ENCODE measurements at regions of chr4 and their contacts with region 1.

Region 1: DNA sequence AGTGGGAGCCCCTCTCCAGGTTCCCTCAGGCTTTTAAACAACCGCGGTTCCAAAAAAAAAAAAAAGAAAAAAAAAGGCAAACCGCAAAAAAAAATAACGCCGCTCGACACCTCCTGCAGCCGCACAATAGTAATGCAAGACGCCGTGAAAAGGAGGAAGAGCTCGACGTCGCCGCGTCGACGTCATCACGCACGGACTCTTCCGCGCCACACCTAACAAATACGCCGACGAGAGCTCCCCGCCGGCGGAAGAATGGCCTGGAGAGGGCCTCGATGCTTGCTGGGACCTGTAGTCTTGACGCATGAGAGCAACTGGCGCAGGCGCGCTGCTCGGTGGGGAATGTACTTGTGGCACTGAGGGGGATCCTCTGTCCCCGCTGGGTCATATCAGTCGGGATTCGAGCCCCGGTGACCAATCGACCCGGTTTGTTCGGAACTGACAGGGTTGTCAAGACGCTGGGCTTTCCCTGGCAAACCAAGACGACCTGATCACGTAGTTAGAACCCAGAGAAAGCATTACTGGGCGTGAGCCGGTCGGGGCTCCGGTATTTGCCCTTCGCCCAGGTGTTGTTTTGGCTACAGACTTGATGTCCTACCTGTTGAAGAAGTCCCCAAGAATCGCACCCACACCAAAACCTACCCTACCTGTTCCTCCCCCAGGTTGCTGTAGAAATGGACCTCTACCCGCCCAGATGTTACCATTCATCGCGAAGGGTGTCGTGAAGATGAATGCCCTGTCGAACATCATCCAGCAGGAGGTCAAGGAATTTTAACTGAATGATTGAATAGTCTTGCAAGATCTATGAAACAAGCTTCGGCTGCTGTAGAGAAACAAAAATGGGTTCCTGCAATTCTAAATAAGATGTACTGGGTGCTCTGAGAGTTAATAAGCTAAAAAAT is at the start of gene CBR4:
- DNase-seq: peak; percentile 96
- ATAC-seq: peak; percentile 98
- H3K4me3 ChIP-seq: peak within 1 kb of the TSS; percentile 74 to 82
- H3K27ac ChIP-seq: peak within 1 kb of the TSS; percentile 69
- H3K4me1 ChIP-seq: peaks cover 11 to 19% of the 10 kb centered on the region in 2 experiments; a peak in 3 of 4 replicates
- H3K27me3 ChIP-seq: no peaks in the 10 kb centered on the region
- CTCF ChIP-seq: peak in 2 of 3 experiments; percentile 14 to 18; a peak in 3 of 6 replicates
- POLR2A ChIP-seq: peak; percentile 86
- RAD21 ChIP-seq: no peak
- total RNA-seq, gene CBR4: 32.3 TPM

Region 2: GRCh38 chr4:167537761-167538160 is 1472.6 kb before region 1 on chr4:
- CTCF ChIA-PET with region 1: no interaction called
- POLR2A ChIA-PET with region 1: no interaction called
- RAD21 ChIA-PET with region 1: no interaction called
- intact Hi-C with region 1: no loop called
- DNase-seq: no peak
- ATAC-seq: no peak
- H3K4me3 ChIP-seq: no peak overlapping the region
- H3K27ac ChIP-seq: no peak overlapping the region
- H3K4me1 ChIP-seq: no peaks in the 10 kb centered on the region
- H3K27me3 ChIP-seq: no peaks in the 10 kb centered on the region
- CTCF ChIP-seq: 0 out of 6 replicates have a peak, but pooled peaks of 1 of the 3 experiments have one; percentile 10
- POLR2A ChIP-seq: no peak
- RAD21 ChIP-seq: no peak

Region 3: DNA sequence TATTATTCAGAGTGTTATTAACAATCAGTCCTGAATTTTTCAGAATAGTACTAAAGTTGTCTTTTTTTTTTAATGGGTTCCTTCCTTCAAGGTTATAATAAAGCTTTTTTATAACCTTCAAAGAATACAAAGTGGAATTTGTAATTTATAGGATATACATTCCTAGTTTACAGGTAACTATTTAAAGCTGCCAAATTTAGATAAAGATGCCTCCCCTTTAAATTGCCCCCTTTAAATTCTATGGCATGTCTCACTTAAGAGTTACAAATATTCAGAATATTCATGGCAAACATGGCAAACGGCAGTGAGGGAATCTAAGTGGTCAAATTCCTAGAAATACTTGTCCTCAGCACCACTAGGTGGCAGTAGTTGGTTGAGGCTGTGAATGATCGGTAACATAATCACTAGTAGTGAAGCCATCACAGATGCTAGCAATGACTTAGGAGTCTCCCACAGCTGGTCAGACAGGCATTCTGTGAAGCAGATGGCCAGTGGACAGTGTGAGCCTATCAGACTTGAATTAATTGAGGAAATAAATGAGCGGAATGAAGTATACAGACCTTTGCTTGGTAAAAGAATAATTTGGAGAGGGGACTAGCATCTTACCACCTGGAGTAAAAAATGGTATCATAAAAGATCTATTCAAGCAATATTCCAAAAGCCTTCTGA is 86.7 kb before region 1 on chr4:
- CTCF ChIA-PET with region 1: interaction called, 7 read pairs
- POLR2A ChIA-PET with region 1: no interaction called
- RAD21 ChIA-PET with region 1: no interaction called
- intact Hi-C with region 1: loop called (anchors 2 kb)
- DNase-seq: peak; percentile 61
- ATAC-seq: peak; percentile 84
- H3K4me3 ChIP-seq: no peak overlapping the region
- H3K27ac ChIP-seq: peak overlapping the region; percentile 17; the same call in 1 of the 2 replicates
- H3K4me1 ChIP-seq: no peaks in the 10 kb centered on the region
- H3K27me3 ChIP-seq: no peaks in the 10 kb centered on the region
- CTCF ChIP-seq: peak; percentile 63 to 83 (median 74)
- POLR2A ChIP-seq: no peak
- RAD21 ChIP-seq: peak; percentile 78

Region 4: DNA sequence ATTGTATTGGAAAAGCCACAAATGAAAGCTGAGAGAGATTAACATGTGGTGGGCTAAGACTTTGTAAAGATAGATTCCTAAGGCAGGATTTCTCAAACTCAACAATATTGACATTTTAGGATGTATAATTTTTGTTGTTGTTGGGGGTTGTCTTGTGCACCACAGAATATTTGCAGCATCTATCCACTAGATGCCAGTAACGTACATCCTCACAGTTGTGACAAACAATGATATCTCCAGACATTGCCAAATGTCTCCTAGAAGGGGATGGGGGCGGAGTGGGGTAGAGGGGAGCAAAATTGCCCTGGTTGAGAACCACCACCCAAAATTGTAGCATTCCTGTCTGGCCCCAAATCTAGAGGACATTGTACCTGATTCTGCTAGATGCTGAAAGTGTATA is 14.4 kb after region 1 on chr4:
- CTCF ChIA-PET with region 1: interaction called, 15 read pairs
- POLR2A ChIA-PET with region 1: interaction called, 7 read pairs
- RAD21 ChIA-PET with region 1: interaction called in 1 of 2 experiments, 3 read pairs
- intact Hi-C with region 1: no loop called
- DNase-seq: peak; percentile 15
- ATAC-seq: peak; percentile 93
- H3K4me3 ChIP-seq: no peak overlapping the region
- H3K27ac ChIP-seq: no peak overlapping the region
- H3K4me1 ChIP-seq: peaks cover 2 to 9% of the 10 kb centered on the region in 2 experiments; a peak in 3 of 4 replicates
- H3K27me3 ChIP-seq: no peaks in the 10 kb centered on the region
- CTCF ChIP-seq: peak; percentile 62 to 76 (median 63); a peak in 5 of 6 replicates
- POLR2A ChIP-seq: no peak
- RAD21 ChIP-seq: peak; percentile 94

Region 5: DNA sequence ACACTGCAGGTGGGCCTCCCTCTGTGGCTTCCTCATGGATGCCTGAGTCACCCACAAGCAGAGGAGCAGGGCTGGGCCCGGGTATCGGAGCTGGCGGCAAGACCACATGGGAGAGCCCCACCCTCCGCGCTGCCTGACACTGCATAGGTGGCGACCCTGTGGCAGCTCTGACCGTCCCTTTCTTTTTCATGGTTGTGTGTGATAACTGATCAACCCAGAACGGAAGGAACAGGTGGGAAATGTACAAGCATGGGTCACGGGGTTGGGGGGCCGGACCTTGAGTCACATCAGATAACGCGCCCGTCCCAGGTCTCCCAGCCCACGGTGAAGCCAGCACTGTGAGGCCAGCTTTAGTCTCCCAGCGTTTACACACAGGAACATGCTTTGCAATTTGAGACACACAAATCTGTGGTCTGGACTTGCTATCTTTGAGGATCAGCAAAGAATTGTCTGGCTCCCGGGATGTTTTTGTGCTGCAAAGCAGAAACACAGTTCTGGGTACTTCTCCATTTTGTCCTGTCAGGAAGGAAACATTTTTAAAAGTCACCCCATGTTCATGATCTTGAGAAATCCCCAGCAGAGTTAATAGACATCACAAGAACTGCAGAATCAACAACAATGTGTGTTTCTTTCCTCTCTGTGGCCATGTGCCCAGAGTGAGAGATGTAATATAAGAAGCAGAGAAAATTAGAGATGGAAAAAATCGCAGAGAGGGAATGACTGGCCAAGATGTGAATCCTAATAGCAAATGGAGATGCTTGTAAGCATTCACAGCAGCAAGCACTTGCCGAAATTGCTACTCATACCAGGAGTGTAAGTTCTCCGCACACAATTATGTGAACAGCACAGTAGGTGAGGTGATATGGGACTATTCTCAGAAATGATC is 69.8 kb after region 1 on chr4:
- CTCF ChIA-PET with region 1: no interaction called
- POLR2A ChIA-PET with region 1: no interaction called
- RAD21 ChIA-PET with region 1: no interaction called
- intact Hi-C with region 1: no loop called
- DNase-seq: no peak
- ATAC-seq: no peak
- H3K4me3 ChIP-seq: no peak overlapping the region
- H3K27ac ChIP-seq: no peak overlapping the region
- H3K4me1 ChIP-seq: no peaks in the 10 kb centered on the region
- H3K27me3 ChIP-seq: no peaks in the 10 kb centered on the region
- CTCF ChIP-seq: no peak
- POLR2A ChIP-seq: no peak
- RAD21 ChIP-seq: no peak

Region 6: DNA sequence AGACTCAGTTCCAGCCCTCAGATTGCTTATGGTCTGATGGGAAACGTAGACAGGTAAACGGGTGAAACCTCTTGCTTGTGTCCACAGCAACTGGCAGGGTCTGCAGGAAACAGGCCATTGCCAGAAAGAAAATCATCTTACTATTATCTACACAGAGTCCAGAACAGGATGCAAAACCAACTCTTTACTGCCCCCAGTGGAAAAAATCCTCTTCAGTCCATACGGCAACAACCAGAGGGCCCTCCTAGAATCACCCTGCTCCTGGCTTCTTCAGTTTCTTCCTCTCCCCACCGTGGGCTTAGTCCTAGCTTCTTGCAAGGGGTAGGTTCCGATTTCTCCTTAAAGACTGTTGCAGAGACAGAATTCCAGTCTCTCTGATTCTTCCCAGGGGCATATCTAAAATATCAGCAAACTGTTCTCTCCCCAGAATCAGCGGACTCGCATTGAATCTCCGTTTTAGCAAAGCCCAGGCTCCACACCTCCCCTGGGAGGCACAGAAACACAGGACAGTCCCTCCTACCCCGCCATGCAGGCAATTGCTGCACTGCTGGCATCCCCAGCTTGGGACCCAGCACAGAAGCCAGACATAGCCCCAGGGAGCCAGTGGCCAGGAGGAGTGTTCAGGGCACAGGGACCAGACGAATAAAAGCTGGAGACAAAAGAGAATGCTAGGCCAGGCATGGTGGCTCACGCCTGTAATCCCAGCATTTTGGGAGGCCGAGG is 301.4 kb after region 1 on chr4:
- CTCF ChIA-PET with region 1: interaction called, 3 read pairs
- POLR2A ChIA-PET with region 1: no interaction called
- RAD21 ChIA-PET with region 1: no interaction called
- intact Hi-C with region 1: loop called (anchors 5 kb)
- DNase-seq: peak; percentile 66
- ATAC-seq: peak; percentile 96
- H3K4me3 ChIP-seq: no peak overlapping the region
- H3K27ac ChIP-seq: peak overlapping the region; percentile 22; the same call in 1 of the 2 replicates
- H3K4me1 ChIP-seq: peaks cover 15 to 40% of the 10 kb centered on the region in 2 experiments
- H3K27me3 ChIP-seq: no peaks in the 10 kb centered on the region
- CTCF ChIP-seq: peak; percentile 61 to 81 (median 68); a peak in 5 of 6 replicates
- POLR2A ChIP-seq: no peak
- RAD21 ChIP-seq: peak; percentile 75

Region 7: DNA sequence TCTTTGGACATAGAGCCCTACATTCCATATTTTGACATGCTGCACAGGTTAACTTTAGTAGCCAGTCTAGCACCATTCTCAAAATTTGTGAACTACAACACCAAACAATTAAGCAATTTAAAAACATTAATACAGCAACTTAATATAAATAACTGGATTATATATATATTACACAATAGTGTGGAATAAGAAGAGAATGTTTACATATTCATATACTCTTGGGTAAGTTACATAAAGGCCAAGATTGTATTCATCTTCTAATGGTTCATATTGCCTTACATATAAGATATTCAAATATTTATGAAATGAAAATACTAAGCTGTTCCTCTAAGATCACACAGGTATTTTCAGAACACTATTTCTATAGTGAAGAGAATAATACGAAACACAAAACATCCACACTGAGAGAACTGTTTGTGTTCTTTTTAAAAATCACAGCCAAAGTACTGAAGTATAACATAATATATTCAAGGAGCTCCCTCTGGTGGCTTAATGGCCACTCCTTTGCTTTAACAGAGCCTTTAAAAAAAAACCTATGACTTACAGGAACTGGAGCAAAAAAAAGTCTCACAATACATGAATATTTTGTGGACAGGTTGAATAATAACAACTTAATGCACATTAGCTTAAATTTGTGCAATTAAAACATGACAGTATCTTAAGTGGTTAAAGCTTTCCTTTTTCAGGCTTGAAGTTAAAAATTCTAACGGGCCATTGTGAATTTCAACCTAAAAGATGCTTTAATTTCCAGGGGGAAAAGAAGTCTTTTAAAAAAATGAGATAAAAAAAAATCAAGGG is 555.8 kb after region 1 on chr4:
- CTCF ChIA-PET with region 1: interaction called, 4 read pairs
- POLR2A ChIA-PET with region 1: no interaction called
- RAD21 ChIA-PET with region 1: no interaction called
- intact Hi-C with region 1: loop called (anchors 5 kb)
- DNase-seq: peak; percentile 38
- ATAC-seq: peak; percentile 85
- H3K4me3 ChIP-seq: no peak overlapping the region
- H3K27ac ChIP-seq: no peak overlapping the region
- H3K4me1 ChIP-seq: no peaks in the 10 kb centered on the region
- H3K27me3 ChIP-seq: no peaks in the 10 kb centered on the region
- CTCF ChIP-seq: peak; percentile 57 to 81 (median 59); a peak in 5 of 6 replicates
- POLR2A ChIP-seq: no peak
- RAD21 ChIP-seq: peak; percentile 72